Right ventricle myocardium inferior (tissue), 1 donor: ENCODE measurements at regions of chr5 and their contacts with region 1.

Region 1: DNA sequence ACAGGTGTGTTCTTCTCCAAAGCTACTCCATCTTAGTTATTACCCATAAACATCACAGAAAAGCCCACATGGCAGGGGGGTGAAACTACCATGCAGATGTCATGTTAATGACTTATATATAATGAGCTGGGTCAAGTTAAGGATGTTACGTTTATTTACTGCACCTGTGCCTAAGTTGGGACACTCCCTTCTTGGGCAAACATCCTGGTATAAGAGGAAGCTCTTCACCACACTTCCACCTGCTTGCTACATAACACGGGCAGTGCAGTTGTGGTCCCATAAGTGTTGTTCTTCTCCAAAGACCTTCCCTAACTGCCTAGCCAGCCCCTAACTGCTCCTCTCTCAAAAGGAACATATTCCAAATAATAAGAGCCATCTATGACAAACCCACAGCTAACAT is 9.3 kb upstream of the ZCCHC9 start:
- DNase-seq: no peak
- ATAC-seq: no peak

Region 2: DNA sequence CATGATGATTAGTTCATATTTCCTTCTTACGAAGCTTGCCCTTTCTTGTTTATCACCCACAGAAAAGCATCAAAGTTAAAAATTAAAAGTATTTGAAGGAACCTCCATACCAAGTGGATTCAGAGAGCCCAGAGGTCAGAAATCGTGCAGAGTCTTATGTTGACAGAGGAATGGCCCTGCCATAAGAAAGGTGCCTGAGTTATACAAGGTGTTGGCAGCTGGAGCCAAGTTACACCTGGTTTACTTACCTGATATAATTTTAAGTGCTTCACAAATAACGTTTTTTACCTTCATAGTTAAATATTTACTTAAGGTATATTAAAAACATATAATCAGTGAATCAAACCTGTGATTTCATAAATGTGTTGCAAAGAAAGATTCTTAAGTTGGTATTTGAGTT is 595.0 kb before region 1 on chr5:
- intact Hi-C with region 1: loop called (anchors 10 kb)
- DNase-seq: no peak
- ATAC-seq: no peak

Region 3: GRCh38 chr5:81225463-81225862 is 66.7 kb before region 1 on chr5:
- intact Hi-C with region 1: no loop called
- DNase-seq: no peak
- ATAC-seq: no peak

Region 4: GRCh38 chr5:81247441-81247972 is 44.6 kb before region 1 on chr5:
- intact Hi-C with region 1: no loop called
- DNase-seq: no peak
- ATAC-seq: no peak